ENCODE measurements at regions of chr14 and their contacts with region 1.

Region 1: GRCh38 chr14:21868442-21869046 is 194.9 kb upstream of the OR4E1 start:
- DNase-seq: peak; percentile 89
- H3K4me3 Mint-ChIP-seq: peak overlapping the region; percentile 68
- H3K27ac Mint-ChIP-seq: peak overlapping the region; percentile 82
- H3K4me1 Mint-ChIP-seq: peaks cover 41% of the 10 kb centered on the region
- H3K27me3 Mint-ChIP-seq: no peaks in the 10 kb centered on the region

Region 2: GRCh38 chr14:21748869-21749303 is 119.7 kb before region 1 on chr14:
- CTCF ChIA-PET with region 1: no interaction called
- POLR2A ChIA-PET with region 1: no interaction called
- intact Hi-C with region 1: no loop called
- DNase-seq: peak; percentile 70
- H3K4me3 Mint-ChIP-seq: peak overlapping the region; percentile 67
- H3K27ac Mint-ChIP-seq: peak overlapping the region; percentile 36
- H3K4me1 Mint-ChIP-seq: peaks cover 8% of the 10 kb centered on the region
- H3K27me3 Mint-ChIP-seq: peaks cover 3% of the 10 kb centered on the region

Region 3: DNA sequence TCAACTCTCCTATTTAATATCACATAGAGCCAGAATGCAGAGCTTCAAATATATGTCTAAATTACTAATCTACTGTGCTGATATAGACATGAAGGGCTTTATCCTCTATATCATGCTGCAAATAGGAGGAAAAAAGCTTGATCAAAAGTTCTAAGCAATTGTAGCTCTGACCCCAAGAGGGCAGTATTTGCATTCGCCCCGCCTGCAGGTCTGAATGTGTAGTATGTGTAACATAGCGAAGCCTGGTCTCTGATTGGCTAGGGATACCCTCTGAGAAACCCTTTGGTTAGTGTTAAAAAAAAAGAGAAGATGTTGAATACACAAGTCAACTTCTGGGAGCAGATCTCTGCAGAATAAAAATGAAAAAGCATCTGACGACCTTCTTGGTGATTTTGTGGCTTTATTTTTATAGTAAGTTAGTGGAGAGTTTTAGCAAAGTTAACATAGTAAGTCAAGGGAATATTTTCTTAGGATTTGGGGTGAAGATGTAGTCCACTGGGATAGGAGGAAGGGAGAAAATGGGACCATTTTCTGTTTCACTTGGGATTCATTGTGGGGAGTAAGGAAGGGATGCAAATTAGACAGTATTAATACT is 43.3 kb before region 1 on chr14:
- CTCF ChIA-PET with region 1: no interaction called
- POLR2A ChIA-PET with region 1: no interaction called
- intact Hi-C with region 1: no loop called
- DNase-seq: peak; percentile 64
- H3K4me3 Mint-ChIP-seq: peak overlapping the region; percentile 58
- H3K27ac Mint-ChIP-seq: peak overlapping the region; percentile 4
- H3K4me1 Mint-ChIP-seq: peaks cover 8% of the 10 kb centered on the region
- H3K27me3 Mint-ChIP-seq: peaks cover 23% of the 10 kb centered on the region

Region 4: DNA sequence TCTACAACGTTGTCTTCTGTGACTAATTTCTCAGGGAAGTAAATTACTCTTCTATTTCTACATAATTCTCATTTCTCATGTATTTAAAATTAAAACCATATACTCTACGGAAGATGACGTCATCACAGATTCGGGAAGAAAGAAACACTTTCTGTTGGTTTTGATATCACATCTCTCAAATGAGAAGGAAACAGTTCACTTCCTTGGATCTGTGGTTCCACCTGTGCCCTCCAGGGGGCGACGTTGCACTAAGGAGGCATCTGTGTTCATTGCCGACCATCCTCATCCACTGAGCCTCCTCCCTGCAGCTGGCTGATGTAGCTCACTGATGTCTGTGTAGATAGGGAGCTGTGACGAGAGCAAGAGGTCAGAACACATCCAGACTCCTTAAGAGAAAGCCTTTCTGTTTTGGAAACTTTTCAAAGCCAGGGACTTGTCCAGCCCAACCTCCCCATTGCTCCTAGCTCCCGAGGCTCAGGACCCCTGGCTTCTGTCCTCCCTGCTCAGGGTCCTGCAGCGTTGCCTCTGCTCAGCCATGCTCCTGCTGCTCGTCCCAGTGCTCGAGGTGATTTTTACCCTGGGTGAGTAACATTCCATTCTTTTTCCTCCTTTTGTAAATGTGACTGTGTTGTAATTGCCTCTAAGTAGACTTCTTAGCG is 22.2 kb before region 1 on chr14:
- CTCF ChIA-PET with region 1: interaction called, 80 read pairs
- POLR2A ChIA-PET with region 1: no interaction called
- intact Hi-C with region 1: loop called (anchors 2 kb)
- DNase-seq: peak; percentile 88
- H3K4me3 Mint-ChIP-seq: peak overlapping the region; percentile 84
- H3K27ac Mint-ChIP-seq: peak overlapping the region; percentile 90
- H3K4me1 Mint-ChIP-seq: peaks cover 9% of the 10 kb centered on the region
- H3K27me3 Mint-ChIP-seq: peaks cover 14% of the 10 kb centered on the region

Region 5: DNA sequence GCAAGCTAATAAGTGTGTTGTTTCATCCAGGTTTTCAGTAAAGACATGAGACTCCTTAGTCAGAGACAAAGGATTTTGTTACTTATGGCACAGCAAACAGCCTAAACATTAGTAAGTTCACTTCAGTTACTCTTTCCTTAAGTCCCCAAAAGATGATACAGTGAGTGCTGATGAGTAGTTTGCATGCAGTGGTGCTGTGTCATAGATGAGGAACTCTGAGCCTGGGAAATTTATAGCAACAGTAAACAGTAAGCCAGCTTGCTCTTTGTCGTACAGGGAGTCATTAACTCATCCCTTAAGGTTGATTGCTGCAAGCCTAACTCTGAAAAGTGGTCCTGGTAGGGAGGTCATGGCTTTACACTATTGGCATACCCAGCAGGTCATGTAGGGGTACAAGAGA is 13.7 kb after region 1 on chr14:
- CTCF ChIA-PET with region 1: interaction called, 5 read pairs
- POLR2A ChIA-PET with region 1: no interaction called
- intact Hi-C with region 1: loop called (anchors 1 kb)
- DNase-seq: no peak
- H3K4me3 Mint-ChIP-seq: no peak overlapping the region
- H3K27ac Mint-ChIP-seq: no peak overlapping the region
- H3K4me1 Mint-ChIP-seq: peaks cover 8% of the 10 kb centered on the region
- H3K27me3 Mint-ChIP-seq: no peaks in the 10 kb centered on the region

Region 6: DNA sequence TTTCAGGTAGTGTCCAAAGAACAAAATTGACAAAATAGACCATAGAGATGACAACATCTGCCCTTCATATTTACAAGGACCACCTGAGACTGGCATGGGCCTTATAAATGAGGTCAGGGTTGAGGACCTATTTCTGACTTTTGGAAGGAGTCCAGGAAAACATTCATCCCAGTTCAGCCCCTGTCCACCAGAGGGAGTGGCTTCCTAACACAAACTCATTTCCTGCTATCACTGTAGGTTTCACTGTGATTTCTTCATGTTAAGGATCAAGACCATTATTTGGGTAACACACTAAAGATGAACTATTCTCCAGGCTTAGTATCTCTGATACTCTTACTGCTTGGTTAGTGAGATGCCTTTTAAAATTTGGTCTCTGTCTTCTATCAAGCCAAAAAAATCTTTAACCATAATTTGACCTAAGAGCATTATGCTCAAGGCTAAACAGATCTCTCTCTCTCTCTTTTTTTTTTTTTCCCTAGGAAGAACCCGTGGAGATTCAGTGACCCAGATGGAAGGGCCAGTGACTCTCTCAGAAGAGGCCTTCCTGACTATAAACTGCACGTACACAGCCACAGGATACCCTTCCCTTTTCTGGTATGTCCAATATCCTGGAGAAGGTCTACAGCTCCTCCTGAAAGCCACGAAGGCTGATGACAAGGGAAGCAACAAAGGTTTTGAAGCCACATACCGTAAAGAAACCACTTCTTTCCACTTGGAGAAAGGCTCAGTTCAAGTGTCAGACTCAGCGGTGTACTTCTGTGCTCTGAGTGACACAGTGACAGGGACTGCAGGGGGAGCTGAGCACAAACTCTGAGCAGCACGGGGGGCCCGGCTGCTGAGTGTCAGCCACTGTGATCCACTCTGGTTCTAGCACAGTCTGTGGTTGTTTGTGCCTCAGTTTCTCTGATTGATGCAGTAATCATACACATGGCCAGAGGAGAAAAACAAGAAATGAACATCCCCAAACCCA is 72.6 kb after region 1 on chr14:
- CTCF ChIA-PET with region 1: no interaction called
- POLR2A ChIA-PET with region 1: no interaction called
- intact Hi-C with region 1: no loop called
- DNase-seq: peak; percentile 51
- H3K4me3 Mint-ChIP-seq: peak overlapping the region; percentile 60
- H3K27ac Mint-ChIP-seq: peak overlapping the region; percentile 75
- H3K4me1 Mint-ChIP-seq: peaks cover 17% of the 10 kb centered on the region
- H3K27me3 Mint-ChIP-seq: peaks cover 5% of the 10 kb centered on the region

Region 7: DNA sequence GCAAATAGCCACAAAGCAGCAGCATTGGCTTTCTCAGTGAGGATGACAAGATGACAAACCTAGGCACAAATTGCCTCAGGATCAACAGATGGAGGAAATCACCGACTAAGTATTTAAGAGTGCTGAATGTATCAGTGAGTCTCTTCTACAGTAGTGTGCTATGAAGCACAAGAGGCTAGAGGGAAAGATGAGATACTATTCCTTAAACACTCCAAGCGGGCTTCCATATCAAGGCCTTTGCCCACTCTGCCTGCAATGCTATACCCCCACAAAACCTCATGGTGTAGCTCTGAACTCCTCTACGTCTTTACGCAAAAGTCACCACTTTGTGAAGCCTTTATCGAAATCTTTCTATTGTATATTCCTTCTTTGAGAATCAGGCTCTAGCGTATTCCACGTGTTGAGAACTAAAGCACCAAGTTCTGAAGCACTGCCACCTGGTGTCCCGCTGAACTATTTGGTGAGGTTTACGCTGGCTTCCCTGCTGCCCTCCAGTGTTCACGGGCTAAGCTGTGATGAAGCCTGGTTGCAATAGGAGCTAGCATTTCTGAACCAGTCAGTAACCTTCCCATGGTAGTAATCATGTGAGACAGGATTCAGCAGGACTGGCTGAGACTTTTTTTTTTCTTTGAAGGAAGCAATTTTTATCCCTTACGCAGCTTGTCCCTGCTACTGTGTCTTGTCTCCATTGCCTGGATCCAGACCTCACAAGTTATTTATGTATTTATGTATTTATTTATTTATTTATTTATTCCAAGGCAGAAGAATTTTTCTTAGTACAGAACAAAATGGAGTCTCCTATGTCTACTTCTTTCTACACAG is 231.6 kb after region 1 on chr14:
- CTCF ChIA-PET with region 1: no interaction called
- POLR2A ChIA-PET with region 1: no interaction called
- intact Hi-C with region 1: no loop called
- DNase-seq: peak; percentile 72
- H3K4me3 Mint-ChIP-seq: no peak overlapping the region
- H3K27ac Mint-ChIP-seq: no peak overlapping the region
- H3K4me1 Mint-ChIP-seq: peaks cover 41% of the 10 kb centered on the region
- H3K27me3 Mint-ChIP-seq: no peaks in the 10 kb centered on the region

Region 8: GRCh38 chr14:22536853-22537338 is 668.4 kb after region 1 on chr14:
- CTCF ChIA-PET with region 1: no interaction called
- POLR2A ChIA-PET with region 1: no interaction called
- intact Hi-C with region 1: loop called (anchors 5 kb)
- DNase-seq: peak; percentile 92
- H3K4me3 Mint-ChIP-seq: peak overlapping the region; percentile 81
- H3K27ac Mint-ChIP-seq: peak overlapping the region; percentile 99
- H3K4me1 Mint-ChIP-seq: peaks cover 95% of the 10 kb centered on the region
- H3K27me3 Mint-ChIP-seq: no peaks in the 10 kb centered on the region